Activated T-helper 2 cell treated with anti-CD3 and anti-CD28 coated beads, Interferon-gamma antibody, Interleukin-2, Interleukin-4, amounts not matched to agents 10 μg/mL and 5 μg/mL and 100 μg/mL, durations not matched to agents 14 hours and 24 hours and 36 hours (primary cell): ENCODE measurements at regions of chr19 and their contacts with region 1.

Region 1: GRCh38 chr19:17305517-17306284 is at the start of gene MRPL34:
- DNase-seq: peak; percentile 96
- H3K4me3 Mint-ChIP-seq: peak within 1 kb of the TSS; percentile 87
- H3K27ac Mint-ChIP-seq: peak within 1 kb of the TSS; percentile 85
- H3K4me1 Mint-ChIP-seq: peaks cover 36% of the 10 kb centered on the region
- H3K27me3 Mint-ChIP-seq: no peaks in the 10 kb centered on the region
- total RNA-seq, gene MRPL34: 92.0 and 95.7 TPM in 2 replicates

Region 2: DNA sequence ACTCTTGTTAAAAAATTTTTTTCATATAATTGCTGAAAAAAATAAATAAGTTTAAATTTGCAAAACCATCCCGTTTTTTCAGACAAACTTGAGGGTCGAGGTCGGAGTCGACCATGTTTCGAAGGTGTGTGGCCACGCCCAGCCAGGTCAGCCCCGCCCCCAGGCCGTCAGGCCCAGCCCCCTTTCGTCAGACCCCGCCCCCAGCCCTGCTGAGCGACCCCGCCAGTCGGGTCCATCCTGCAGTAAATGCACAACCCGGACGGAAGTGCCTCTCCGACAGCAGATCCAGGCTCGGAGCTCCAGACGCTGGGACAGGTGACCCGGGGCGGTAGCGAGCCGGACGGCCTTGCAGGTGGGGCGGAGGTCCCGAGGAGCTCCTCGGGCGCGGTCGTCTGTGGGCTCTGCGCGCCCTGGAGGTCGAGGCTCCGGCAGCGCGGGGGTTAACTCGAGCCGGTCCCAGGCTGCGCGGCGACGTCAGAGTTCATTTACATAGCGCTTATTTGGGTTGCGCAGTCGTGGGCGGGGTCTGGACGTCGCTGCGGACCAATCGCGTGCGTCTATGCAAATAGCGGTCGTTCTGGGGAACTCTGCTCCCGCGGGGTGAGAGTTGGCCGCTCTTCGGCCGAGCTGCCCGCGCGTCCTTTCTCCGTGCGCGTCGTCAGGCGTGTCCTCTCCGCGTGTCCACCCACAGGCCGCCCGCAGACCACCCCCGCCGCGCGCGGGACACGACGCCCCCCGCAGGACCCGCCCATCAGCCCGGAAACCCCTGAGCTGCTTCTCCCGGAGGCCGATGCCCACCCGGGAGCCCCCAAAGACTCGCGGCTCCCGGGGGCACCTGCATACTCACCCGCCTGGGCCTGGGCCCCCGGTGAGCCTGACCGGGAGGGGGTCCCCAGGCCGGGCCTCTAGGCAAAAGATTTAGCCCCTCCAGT is 79.4 kb before region 1 on chr19 and contains the start of gene OCEL1:
- intact Hi-C with region 1: loop called (anchors 5 kb)
- DNase-seq: peak; percentile 96
- H3K4me3 Mint-ChIP-seq: peak within 1 kb of the TSS; percentile 90
- H3K27ac Mint-ChIP-seq: peak within 1 kb of the TSS; percentile 98
- H3K4me1 Mint-ChIP-seq: peaks cover 5% of the 10 kb centered on the region
- H3K27me3 Mint-ChIP-seq: no peaks in the 10 kb centered on the region
- total RNA-seq, gene OCEL1: 20.7 and 22.0 TPM in 2 replicates

Region 3: DNA sequence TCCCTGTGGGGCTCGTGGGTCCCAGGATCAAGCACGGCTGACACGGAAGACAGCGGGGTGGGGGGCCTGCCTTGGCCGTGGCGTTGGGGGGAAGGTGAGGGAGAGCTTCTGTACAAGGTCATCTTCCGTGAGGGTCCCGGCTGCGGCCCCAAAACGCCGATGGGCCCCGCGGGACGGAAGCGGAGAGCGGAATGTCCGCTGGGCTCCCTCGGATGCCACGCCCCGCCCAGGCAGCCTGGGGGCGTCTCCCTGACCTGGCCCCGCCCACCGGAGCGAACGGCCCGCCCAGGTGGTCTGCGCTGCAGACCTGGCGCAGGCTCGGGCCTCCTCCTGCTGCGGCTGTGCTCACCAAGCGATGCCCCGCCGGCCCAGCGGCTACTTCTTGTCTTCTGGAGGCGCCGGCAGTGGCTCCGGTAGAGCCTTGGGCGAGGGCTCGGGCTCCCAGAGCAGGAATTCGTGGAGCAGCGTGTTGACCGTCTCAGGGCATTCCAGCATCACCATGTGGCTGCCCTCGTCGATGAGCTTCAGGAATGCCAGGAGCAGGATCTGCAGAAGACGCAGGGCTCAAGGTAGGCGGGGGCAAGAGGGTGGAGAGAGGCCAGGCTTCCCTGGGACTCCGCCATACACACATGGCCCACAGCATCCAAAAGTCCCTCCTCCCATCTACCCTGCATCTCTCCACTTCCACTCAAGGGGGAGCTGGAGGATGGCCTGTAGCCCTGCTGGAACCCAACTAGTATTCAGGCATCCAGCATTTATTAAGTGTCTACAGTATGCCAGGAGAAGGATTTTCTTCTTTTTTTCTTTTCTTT is 13.2 kb before region 1 on chr19:
- intact Hi-C with region 1: loop called (anchors 1 kb)
- DNase-seq: peak; percentile 74
- H3K4me3 Mint-ChIP-seq: peak overlapping the region; percentile 87
- H3K27ac Mint-ChIP-seq: peak overlapping the region; percentile 78
- H3K4me1 Mint-ChIP-seq: peaks cover 8% of the 10 kb centered on the region
- H3K27me3 Mint-ChIP-seq: no peaks in the 10 kb centered on the region

Region 4: DNA sequence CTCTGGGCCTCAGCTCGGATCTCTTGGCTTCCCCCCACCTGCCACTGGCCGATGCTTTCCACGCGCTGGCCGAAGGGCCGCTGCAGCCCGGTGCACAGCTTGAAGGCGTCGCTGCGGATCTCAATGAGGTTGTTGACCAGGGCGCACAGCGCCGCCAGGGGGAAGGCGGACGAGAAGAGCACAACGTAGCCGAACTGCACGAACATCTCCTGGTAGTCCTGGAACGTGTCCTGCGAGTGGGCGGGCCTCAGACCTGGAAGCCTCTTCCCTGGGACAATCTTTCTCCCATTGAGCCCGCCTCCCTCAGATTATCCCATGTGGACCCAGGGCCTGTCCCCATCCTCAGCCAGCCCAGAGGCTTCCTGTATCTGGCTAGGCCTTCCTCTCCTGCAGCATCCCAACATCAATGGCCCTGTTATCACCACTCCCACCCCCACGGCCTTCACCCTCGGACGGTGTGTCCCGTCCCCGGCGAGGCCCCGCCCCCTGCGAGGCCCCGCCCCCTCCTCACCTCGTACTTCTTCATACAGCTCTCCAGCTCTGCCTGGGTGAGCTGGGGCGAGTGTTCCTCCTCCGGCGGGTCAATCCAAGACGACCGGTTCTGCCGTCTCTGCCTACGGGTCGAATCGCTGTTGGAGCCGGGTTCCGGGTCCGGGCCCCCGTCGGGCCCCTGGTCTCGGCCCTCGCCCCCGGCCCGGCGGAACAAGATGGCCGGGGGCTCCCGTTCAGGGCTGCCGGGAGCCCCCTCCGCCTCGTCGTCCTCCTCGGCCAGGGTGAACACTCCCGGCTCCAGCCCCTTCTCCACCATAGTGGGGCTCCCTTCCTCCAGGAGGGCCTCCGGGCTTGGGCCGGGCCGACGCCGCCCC is 22.2 kb after region 1 on chr19:
- intact Hi-C with region 1: loop called (anchors 1 kb)
- DNase-seq: no peak
- H3K4me3 Mint-ChIP-seq: peak overlapping the region; percentile 59
- H3K27ac Mint-ChIP-seq: no peak overlapping the region
- H3K4me1 Mint-ChIP-seq: peaks cover 4% of the 10 kb centered on the region
- H3K27me3 Mint-ChIP-seq: peaks cover 9% of the 10 kb centered on the region

Region 5: GRCh38 chr19:17336872-17337722 is 31.4 kb after region 1 on chr19 and contains the start of gene GTPBP3:
- intact Hi-C with region 1: loop called (anchors 1 kb)
- DNase-seq: peak; percentile 96
- H3K4me3 Mint-ChIP-seq: peak within 1 kb of the TSS; percentile 84
- H3K27ac Mint-ChIP-seq: peak within 1 kb of the TSS; percentile 89
- H3K4me1 Mint-ChIP-seq: peaks cover 15% of the 10 kb centered on the region
- H3K27me3 Mint-ChIP-seq: no peaks in the 10 kb centered on the region
- total RNA-seq, gene GTPBP3: 62.5 and 66.5 TPM in 2 replicates